Activated CD4-positive, alpha-beta T cell treated with anti-CD3 and anti-CD28 coated beads, Interleukin-2, amount 10 ng/mL, durations not matched to agents 24 days and 14 days (primary cell): ENCODE measurements at regions of chr1 and their contacts with region 1.

Region 1: DNA sequence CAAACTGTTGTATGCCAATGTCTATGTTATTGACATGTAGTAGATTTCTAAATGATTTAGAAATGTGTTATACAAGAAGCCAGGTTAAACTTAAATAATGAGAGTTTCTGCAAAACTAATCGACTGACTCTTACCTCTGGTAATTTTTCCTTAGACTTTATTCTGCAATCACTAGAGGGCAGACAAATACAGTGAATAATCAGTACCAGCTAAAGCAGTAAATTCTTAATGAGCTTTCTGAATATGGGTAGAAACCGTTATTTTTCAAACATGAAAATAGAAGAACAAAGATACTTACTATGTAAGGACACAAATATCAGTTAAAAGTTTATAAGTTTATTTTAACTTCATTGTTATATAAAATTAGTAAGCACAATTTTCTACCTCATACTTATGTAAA is 97.9 kb upstream of the RGS1 start:
- DNase-seq: no peak
- H3K4me3 Mint-ChIP-seq: no peak overlapping the region
- H3K27ac Mint-ChIP-seq: no peak overlapping the region
- H3K4me1 Mint-ChIP-seq: peaks cover 2% of the 10 kb centered on the region
- H3K27me3 Mint-ChIP-seq: peaks cover 7% of the 10 kb centered on the region

Region 2: DNA sequence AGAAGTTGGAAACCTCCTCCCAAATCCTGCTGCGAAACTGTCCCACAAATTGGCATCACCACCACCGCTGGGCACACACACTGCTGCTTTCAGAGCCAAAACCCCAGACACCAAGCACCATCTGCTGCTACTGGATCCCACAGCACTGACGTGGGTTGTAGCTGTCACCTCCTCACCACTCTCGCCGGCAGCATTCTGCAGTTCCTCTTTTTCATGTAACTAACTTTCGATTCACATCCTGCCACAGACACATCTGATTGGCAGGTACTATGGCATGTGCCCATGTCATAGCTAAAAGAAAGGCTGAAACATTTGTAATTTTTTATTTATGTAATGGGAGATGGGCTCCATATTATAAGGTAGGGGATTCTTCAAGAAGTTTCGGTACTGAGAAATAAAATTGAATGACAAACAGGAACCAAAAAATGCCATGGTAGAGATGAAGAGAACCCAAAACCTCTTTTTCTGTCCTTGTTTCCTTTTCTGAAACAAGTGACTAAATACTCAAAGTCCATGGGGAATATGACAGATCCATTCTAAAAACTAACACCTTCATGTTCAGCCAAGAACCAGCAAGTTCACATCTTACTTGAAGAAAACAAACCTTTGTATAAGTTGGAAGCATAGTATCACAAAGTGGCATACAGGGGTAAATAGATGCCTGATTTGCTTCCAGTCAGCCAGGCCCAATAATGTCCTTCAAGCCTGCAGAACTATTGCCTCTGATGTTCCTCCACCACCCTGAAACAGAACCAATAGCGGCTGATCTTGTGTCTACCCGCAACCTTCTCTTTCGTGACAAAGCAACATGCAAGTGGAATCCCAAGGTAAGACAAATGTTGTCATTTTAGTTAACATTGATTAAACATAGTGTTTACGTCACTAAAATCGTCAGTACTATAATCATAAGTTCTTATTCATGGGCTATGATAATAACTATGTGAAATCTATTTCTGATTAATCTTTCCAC is 131.8 kb after region 1 on chr1:
- intact Hi-C with region 1: loop called (anchors 1 kb)
- DNase-seq: peak; percentile 85
- H3K4me3 Mint-ChIP-seq: peak overlapping the region; percentile 63
- H3K27ac Mint-ChIP-seq: peak overlapping the region; percentile 28
- H3K4me1 Mint-ChIP-seq: peaks cover 13% of the 10 kb centered on the region
- H3K27me3 Mint-ChIP-seq: no peaks in the 10 kb centered on the region

Region 3: DNA sequence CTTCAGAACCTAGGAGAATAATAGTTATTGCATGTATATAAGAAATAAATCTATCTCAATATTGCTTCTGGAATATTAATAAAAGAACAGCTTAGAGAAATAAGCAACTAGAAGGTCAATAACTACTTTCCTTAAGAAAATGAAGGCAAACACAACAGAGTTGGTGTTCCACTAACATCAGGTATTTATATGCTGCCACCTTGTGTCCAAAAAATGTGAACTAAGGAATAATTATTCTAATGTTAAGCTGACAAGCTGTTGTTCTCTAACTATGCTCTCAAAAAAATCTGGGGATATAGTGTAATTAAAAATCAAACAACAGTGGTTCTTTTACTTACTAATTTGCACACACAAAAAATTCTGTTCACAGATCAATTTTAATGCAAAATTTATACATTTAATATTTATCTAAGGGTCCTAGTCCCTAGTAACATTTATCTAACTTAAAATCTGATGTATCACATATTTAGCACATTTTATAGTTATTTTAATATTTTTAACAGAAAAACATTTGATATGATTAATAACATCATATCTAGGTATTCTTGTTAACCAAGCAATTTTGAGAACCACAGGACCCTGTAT is 541.9 kb after region 1 on chr1:
- intact Hi-C with region 1: loop called (anchors 5 kb)
- DNase-seq: peak; percentile 69
- H3K4me3 Mint-ChIP-seq: no peak overlapping the region
- H3K27ac Mint-ChIP-seq: no peak overlapping the region
- H3K4me1 Mint-ChIP-seq: no peaks in the 10 kb centered on the region
- H3K27me3 Mint-ChIP-seq: no peaks in the 10 kb centered on the region